Caco-2 (cell line): ENCODE measurements at regions of chr10 and their contacts with region 1.

Region 1: GRCh38 chr10:121615435-121615793 is 17.2 kb upstream of the FGFR2 start:
- DNase-seq: no peak
- H3K4me3 ChIP-seq: no peak overlapping the region
- H3K4me3 Mint-ChIP-seq: no peak overlapping the region
- H3K27ac Mint-ChIP-seq: no peak overlapping the region
- H3K4me1 ChIP-seq: peaks cover 14% of the 10 kb centered on the region
- H3K4me1 Mint-ChIP-seq: peaks cover 31% of the 10 kb centered on the region
- H3K27me3 ChIP-seq: no peaks in the 10 kb centered on the region
- H3K27me3 Mint-ChIP-seq: no peaks in the 10 kb centered on the region
- CTCF ChIP-seq: no peak

Region 2: DNA sequence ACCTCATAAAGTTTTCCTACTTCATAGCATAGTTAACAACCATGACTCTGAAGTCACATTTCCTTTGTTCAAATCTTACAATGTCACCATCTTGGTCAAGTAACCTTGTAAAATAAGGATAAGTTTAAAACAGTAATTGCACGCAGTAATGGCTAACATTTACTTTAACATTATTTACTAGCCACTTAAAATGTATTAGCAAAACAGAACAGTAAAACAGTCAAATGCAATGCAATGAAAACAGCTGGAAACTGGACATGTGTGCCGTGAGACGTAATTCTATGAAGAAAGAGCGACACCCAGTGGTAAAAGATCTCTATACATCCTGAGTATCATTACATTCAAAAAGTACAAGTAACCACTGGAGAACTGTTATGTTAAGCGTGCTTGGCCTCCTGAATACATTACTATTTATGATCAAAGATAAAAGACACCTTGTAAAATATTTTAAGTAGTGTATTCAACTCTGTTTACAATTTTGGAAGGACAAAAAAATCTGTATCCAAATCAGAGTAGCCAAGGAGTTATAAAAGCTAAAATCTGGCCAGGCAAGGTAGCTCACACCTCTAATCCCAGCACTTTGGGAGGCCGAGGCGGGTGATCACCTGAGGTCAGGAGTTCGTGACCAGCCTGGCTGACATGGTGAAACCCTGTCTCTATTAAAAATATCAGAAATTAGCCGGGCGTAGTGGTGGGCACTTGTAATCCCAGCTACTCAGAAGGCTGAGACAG is 285.2 kb after region 1 on chr10:
- CTCF ChIA-PET with region 1: no interaction called
- POLR2A ChIA-PET with region 1: no interaction called
- intact Hi-C with region 1: loop called (anchors 10 kb)
- DNase-seq: peak in 1 of 2 experiments; percentile 72
- H3K4me3 ChIP-seq: no peak overlapping the region
- H3K4me3 Mint-ChIP-seq: no peak overlapping the region
- H3K27ac Mint-ChIP-seq: no peak overlapping the region
- H3K4me1 ChIP-seq: no peaks in the 10 kb centered on the region; the same call in 1 of the 2 replicates
- H3K4me1 Mint-ChIP-seq: no peaks in the 10 kb centered on the region
- H3K27me3 ChIP-seq: no peaks in the 10 kb centered on the region
- H3K27me3 Mint-ChIP-seq: no peaks in the 10 kb centered on the region
- CTCF ChIP-seq: peak; percentile 60 to 73